HepG2 (cell line): ENCODE measurements at regions of chr5 and their contacts with region 1.

Region 1: GRCh38 chr5:130397132-130397531 is 492.9 kb downstream of the CHSY3 start:
- DNase-seq: no peak
- ATAC-seq: no peak
- H3K4me3 ChIP-seq: no peak overlapping the region
- H3K27ac ChIP-seq: no peak overlapping the region
- H3K4me1 ChIP-seq: 0 out of 2 replicates have a peak, but pooled peaks cover 3% of the 10 kb centered on the region
- H3K27me3 ChIP-seq: no peaks in the 10 kb centered on the region
- CTCF ChIP-seq: no peak
- EP300 ChIP-seq: no peak
- POLR2A ChIP-seq: no peak
- RAD21 ChIP-seq: no peak

Region 2: DNA sequence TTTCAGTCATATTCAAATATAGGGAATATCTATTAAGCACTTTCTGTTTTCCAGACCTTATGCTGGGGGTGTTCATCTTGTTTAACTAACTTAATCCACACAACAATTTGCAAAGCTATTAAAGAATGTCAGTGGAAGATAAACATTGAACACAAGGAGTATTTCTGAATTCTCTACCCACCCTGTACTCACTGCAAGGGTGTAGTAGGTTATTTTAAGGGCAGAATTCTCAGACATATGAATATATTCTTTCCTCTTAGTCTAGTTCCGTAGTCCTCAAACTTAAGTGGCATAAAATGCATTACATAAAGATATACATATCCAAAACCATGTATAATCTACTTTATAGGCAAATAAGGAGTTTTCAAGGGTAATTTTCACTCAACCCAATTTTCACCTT is 512.8 kb before region 1 on chr5:
- CTCF ChIA-PET with region 1: no interaction called
- POLR2A ChIA-PET with region 1: no interaction called
- in situ Hi-C with region 1: no loop called
- intact Hi-C with region 1: no loop called
- DNase-seq: no peak
- ATAC-seq: no peak
- H3K4me3 ChIP-seq: no peak overlapping the region
- H3K27ac ChIP-seq: no peak overlapping the region
- H3K4me1 ChIP-seq: no peaks in the 10 kb centered on the region
- H3K27me3 ChIP-seq: no peaks in the 10 kb centered on the region
- CTCF ChIP-seq: no peak
- EP300 ChIP-seq: no peak
- POLR2A ChIP-seq: no peak
- RAD21 ChIP-seq: no peak

Region 3: DNA sequence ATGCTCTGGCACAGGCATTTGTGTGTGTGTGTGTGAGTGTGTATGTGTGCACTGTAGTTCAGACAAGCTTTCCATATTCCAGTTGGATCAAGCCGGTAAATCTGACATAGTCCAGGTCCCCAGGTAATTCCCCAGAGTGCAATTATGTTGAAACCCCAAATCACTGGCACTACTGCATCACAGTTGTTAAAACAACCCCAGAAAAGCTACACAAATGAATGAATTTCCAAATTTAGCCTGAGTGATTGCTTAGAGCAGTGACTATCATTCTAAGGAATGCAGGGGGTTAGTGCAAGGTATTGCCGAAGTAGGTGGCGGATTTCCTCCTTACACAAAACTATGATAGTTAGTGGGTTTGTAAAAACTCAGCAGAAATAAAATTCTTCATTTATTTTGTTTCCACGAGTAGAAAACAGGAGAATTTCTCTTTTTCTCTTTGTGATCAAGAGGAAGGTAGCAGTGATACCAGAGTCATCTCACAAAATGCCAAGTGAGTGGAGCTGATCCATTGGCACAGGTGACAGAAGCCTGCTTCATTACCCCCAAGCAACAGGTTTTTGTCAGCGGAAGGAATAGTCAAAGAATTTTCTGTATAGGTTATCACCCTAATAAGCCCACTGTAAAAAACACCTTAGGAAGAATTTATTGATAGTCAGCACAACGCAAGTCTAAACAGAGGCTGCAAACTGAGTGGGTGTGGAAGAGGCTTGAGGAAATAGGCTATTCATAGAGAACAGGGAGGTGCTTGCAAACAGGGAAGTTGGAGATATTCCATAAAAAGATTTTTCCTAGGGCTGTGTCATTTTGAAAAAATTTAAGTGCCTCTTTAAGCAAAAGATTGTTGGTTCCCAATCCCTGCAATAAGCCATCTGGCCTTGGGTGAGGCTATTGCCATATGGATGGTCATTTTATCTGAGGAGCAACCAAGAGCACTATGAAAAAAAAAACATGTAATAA is 107.7 kb before region 1 on chr5:
- CTCF ChIA-PET with region 1: no interaction called
- POLR2A ChIA-PET with region 1: no interaction called
- in situ Hi-C with region 1: no loop called
- intact Hi-C with region 1: loop called (anchors 10 kb)
- DNase-seq: no peak
- ATAC-seq: no peak
- H3K4me3 ChIP-seq: no peak overlapping the region
- H3K27ac ChIP-seq: no peak overlapping the region
- H3K4me1 ChIP-seq: no peaks in the 10 kb centered on the region
- H3K27me3 ChIP-seq: no peaks in the 10 kb centered on the region
- CTCF ChIP-seq: no peak
- EP300 ChIP-seq: no peak
- POLR2A ChIP-seq: no peak
- RAD21 ChIP-seq: no peak

Region 4: GRCh38 chr5:130424341-130424740 is 27.2 kb after region 1 on chr5:
- CTCF ChIA-PET with region 1: no interaction called
- POLR2A ChIA-PET with region 1: no interaction called
- in situ Hi-C with region 1: no loop called
- intact Hi-C with region 1: no loop called
- DNase-seq: no peak
- ATAC-seq: no peak
- H3K4me3 ChIP-seq: no peak overlapping the region
- H3K27ac ChIP-seq: no peak overlapping the region
- H3K4me1 ChIP-seq: no peaks in the 10 kb centered on the region
- H3K27me3 ChIP-seq: no peaks in the 10 kb centered on the region
- CTCF ChIP-seq: no peak
- EP300 ChIP-seq: no peak
- POLR2A ChIP-seq: no peak
- RAD21 ChIP-seq: no peak